Head of caudate nucleus (tissue), 42 donors: ENCODE measurements at regions of chr17 and their contacts with region 1.

Region 1: DNA sequence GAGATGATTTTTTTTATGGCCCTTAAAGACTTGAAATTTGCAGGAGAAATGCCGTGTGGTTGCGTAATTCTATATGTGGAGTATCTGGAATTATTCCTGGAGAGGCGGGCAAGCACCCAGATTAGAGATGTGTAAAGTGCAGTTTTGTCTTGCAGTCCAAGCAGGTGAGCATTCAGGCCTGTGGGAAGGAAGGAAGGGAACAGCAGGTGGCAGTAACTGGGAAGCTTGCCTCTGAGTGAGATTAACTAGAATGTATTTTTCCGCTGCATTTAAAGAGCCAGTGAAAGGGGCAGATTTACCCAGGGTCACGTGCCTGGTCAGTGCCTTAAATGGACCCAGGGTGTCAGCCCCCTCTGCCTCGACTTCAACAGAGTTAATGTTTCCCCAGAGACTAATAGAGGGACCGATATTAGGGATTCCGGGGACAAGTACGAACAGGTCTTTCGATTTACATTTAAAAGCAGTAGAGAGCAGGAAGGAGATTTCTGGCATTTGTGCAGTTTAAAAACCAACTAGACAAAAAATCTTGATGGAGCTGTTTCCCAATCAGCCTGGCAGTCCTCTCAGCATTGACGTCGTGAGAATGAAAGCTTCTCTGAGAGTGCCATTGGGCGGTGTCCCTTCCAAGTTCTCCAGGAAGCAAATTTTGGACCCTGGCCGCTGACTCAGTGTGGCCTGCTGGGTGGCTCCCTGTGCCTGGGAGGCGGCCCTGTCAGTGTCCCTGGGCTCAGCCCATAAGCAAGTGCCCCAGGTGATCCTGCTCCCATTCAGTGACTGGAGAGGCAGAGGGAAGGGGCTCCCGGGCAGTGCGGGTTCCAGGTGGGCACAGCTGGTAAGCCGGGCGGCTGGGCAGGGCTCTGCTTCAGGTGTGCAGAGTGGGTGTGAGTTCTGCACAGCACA is 38.2 kb downstream of the KSR1 start:
- DNase-seq: peak in 33 of 42 donors; percentile 26 to 84 (median 58)

Region 2: DNA sequence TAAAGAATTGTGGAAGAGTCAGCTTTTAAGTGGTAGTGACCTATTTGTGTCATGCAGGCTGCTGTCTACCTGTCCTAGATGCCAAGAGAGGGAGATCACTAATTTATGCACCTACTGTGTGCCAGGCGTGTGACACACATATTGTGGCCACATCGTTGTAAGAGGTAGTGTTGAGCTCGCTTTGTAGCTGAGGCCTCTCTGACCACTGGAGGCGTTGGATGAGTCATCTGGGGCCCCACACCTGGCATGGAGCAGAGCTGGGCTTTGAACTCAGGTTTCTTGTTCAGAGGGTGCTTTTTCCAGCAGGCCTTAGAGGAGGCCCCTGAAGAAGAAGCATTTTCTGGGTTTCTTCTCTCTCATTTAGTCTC is 84.3 kb after region 1 on chr17:
- intact Hi-C with region 1: loop called (anchors 10 kb)
- DNase-seq: no peak